Activated CD4-positive, alpha-beta T cell treated with anti-CD3 and anti-CD28 coated beads for 36 hours (primary cell): ENCODE measurements at regions of chr21 and their contacts with region 1.

Region 1: GRCh38 chr21:22393324-22393723 is 1395.1 kb downstream of the NCAM2 start:
- DNase-seq: no peak
- ATAC-seq: no peak
- H3K4me3 Mint-ChIP-seq: no peak overlapping the region
- H3K27ac Mint-ChIP-seq: no peak overlapping the region
- H3K4me1 Mint-ChIP-seq: no peaks in the 10 kb centered on the region
- H3K27me3 Mint-ChIP-seq: no peaks in the 10 kb centered on the region

Region 2: GRCh38 chr21:22632176-22632575 is 238.9 kb after region 1 on chr21:
- CTCF ChIA-PET with region 1: no interaction called
- POLR2A ChIA-PET with region 1: no interaction called
- intact Hi-C with region 1: loop called in 1 of 2 experiments (anchors 10 kb)
- DNase-seq: no peak
- ATAC-seq: no peak
- H3K4me3 Mint-ChIP-seq: no peak overlapping the region
- H3K27ac Mint-ChIP-seq: no peak overlapping the region
- H3K4me1 Mint-ChIP-seq: no peaks in the 10 kb centered on the region
- H3K27me3 Mint-ChIP-seq: no peaks in the 10 kb centered on the region

Region 3: GRCh38 chr21:22813201-22813600 is 419.9 kb after region 1 on chr21:
- CTCF ChIA-PET with region 1: no interaction called
- POLR2A ChIA-PET with region 1: no interaction called
- intact Hi-C with region 1: no loop called
- DNase-seq: no peak
- ATAC-seq: no peak
- H3K4me3 Mint-ChIP-seq: no peak overlapping the region
- H3K27ac Mint-ChIP-seq: no peak overlapping the region
- H3K4me1 Mint-ChIP-seq: no peaks in the 10 kb centered on the region
- H3K27me3 Mint-ChIP-seq: no peaks in the 10 kb centered on the region